ENCODE measurements at regions of chr10 and their contacts with region 1.

Region 1: DNA sequence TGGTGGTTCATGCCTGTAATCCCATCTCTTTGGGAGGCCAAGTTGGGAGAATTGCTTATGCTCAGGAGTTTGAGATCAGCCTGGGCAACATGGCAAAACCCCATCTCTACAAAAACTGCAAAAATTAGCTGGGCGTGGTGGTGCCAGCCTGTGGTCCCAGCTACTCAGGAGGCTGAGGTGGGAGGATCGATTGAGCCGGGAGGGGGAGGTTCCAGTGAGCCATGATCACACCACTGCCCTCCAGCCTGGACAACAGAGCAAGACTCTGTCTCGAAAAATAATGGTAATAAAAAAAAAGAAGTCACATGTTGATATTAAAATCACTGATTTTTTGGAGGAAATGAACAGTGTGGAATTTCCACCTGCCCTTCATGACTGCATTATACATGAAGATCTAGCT is 15.8 kb downstream of the PHYH start:
- DNase-seq: no peak
- H3K4me3 ChIP-seq: no peak overlapping the region
- H3K27ac ChIP-seq: no peak overlapping the region
- H3K4me1 ChIP-seq: no peaks in the 10 kb centered on the region
- H3K27me3 ChIP-seq: no peaks in the 10 kb centered on the region
- CTCF ChIP-seq: no peak

Region 2: DNA sequence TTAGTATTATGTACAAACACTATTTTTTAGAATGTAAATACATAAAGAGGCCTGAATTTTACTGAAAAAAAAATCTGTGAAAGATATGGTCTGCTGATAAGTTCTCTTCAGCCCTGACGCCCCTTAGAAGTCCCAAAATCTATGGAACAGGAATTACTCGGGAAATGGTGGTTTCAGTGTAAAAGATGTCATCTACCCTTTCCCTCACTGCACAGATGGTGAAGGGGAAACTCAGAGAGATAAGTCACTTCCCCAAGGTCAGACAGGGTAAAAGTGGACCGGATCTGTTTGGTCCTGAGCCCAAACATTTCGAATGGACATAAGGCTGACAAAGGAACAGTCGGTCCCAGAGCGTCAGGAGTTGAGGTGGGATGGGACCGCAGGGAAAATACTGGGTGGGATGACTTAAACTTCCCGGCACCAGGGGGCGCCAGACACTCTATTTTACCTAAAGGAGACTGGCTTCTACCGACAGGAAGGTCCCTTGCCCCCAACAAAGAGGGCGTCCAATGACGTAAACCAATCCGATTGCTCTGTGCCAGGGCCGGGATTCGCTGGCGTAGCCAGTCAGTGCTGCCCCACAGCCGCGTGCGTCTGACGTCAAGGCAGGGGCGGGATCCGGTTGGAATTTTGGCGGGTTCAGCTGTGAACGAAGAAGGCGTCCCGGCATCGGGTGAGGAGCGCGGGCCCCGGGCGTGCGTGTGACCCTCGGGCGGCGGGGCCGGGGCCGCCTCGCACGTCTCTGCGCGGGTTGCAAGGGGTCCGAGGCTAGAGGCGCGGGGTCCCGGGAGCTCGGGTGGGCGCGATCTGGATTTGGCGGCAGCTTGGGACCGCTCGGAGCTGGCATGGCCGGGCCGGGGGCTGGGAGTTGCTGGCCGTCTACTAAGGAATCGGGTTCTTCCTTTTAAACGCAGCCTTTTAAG is 122.9 kb before region 1 on chr10 and contains the start of gene MCM10:
- intact Hi-C with region 1: loop called (anchors 10 kb)
- DNase-seq: peak; percentile 97
- H3K4me3 ChIP-seq: peak within 1 kb of the TSS; percentile 66
- H3K27ac ChIP-seq: no peak within 1 kb of the TSS
- H3K4me1 ChIP-seq: peaks cover 15% of the 10 kb centered on the region
- H3K27me3 ChIP-seq: no peaks in the 10 kb centered on the region
- CTCF ChIP-seq: peak; percentile 88
- total RNA-seq, gene MCM10: 0.08 TPM